ENCODE measurements at regions of chr17 and their contacts with region 1.

Region 1: GRCh38 chr17:58317421-58318064 is 11.1 kb downstream of the TSPOAP1 start:
- DNase-seq: peak in 13 of 14 experiments; percentile 59 to 91 (median 69)
- ATAC-seq: peak; percentile 96
- H3K4me3 ChIP-seq: no peak overlapping the region
- H3K4me3 Mint-ChIP-seq: no peak overlapping the region
- H3K27ac ChIP-seq: peak overlapping the region; percentile 35 to 38
- H3K27ac Mint-ChIP-seq: peak overlapping the region; percentile 62
- H3K4me1 ChIP-seq: peaks cover 17% of the 10 kb centered on the region
- H3K4me1 Mint-ChIP-seq: peaks cover 7% of the 10 kb centered on the region
- H3K27me3 ChIP-seq: no peaks in the 10 kb centered on the region
- H3K27me3 Mint-ChIP-seq: no peaks in the 10 kb centered on the region
- CTCF ChIP-seq: peak; percentile 79

Region 2: GRCh38 chr17:58277107-58277801 is 40.3 kb before region 1 on chr17:
- CTCF ChIA-PET with region 1: no interaction called
- POLR2A ChIA-PET with region 1: no interaction called
- intact Hi-C with region 1: no loop called
- DNase-seq: peak in 4 of 14 experiments; percentile 23 to 52 (median 44)
- ATAC-seq: no peak
- H3K4me3 ChIP-seq: no peak overlapping the region
- H3K4me3 Mint-ChIP-seq: no peak overlapping the region
- H3K27ac ChIP-seq: no peak overlapping the region
- H3K27ac Mint-ChIP-seq: no peak overlapping the region
- H3K4me1 ChIP-seq: peaks cover 6% of the 10 kb centered on the region
- H3K4me1 Mint-ChIP-seq: peaks cover 4% of the 10 kb centered on the region
- H3K27me3 ChIP-seq: no peaks in the 10 kb centered on the region
- H3K27me3 Mint-ChIP-seq: peaks cover 39% of the 10 kb centered on the region
- CTCF ChIP-seq: peak; percentile 25

Region 3: GRCh38 chr17:58303971-58304725 is 13.4 kb before region 1 on chr17:
- CTCF ChIA-PET with region 1: interaction called, 17 read pairs
- POLR2A ChIA-PET with region 1: interaction called, 3 read pairs
- intact Hi-C with region 1: no loop called
- DNase-seq: peak; percentile 38 to 78 (median 51)
- ATAC-seq: peak; percentile 95
- H3K4me3 ChIP-seq: no peak overlapping the region
- H3K4me3 Mint-ChIP-seq: no peak overlapping the region
- H3K27ac ChIP-seq: no peak overlapping the region
- H3K27ac Mint-ChIP-seq: no peak overlapping the region
- H3K4me1 ChIP-seq: peaks cover 8% of the 10 kb centered on the region
- H3K4me1 Mint-ChIP-seq: peaks cover 6% of the 10 kb centered on the region
- H3K27me3 ChIP-seq: no peaks in the 10 kb centered on the region
- H3K27me3 Mint-ChIP-seq: no peaks in the 10 kb centered on the region
- CTCF ChIP-seq: peak; percentile 71

Region 4: DNA sequence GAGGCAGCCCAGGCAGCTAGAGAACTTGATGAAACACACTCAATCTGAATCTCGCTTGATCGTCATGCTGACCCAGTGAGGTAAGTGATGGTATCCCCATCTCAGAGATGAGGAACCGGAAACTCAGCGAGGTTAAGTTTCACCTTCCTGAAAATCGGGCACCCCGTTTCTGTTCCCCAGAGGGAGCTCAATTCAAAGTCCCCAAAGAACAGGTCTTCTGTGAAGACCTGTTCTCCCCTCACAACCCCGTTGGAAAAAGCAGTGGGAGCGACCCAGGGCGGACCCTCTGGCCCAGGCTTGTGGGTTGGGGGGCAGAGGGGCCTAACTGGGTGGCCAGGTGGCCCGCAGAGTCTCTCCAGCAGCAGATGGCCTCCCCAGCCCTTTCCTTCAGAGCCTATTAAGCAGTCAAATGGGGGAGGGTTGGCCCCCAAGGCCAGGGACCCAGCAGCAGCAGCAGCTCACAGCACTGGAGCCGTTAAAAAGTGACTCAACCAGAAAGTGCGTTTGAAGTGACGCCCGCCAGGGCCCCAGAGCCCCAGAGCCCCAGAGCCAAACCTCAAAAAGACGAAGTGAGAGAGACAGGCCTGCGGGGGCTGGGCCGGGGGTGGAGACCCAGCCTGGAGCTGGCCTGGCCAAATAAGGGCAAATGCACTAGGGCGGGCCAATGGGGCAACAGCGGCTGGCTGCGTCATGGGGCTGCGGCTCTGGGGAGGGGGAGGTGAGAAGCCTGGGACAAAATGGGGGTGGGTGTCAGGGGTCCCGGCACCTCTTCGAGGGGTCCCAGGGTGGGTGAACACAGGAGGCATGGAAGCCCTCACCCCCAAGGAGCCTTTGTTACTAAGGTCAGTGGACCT is 20.3 kb after region 1 on chr17:
- CTCF ChIA-PET with region 1: interaction called, 211 read pairs
- POLR2A ChIA-PET with region 1: interaction called, 1,359 read pairs
- intact Hi-C with region 1: no loop called
- DNase-seq: peak; percentile 78 to 96 (median 88)
- ATAC-seq: peak; percentile 73
- H3K4me3 ChIP-seq: peak overlapping the region; percentile 84
- H3K4me3 Mint-ChIP-seq: peak overlapping the region; percentile 90
- H3K27ac ChIP-seq: peak overlapping the region; percentile 97 to 98
- H3K27ac Mint-ChIP-seq: peak overlapping the region; percentile 84
- H3K4me1 ChIP-seq: peaks cover 96% of the 10 kb centered on the region
- H3K4me1 Mint-ChIP-seq: peaks cover 92% of the 10 kb centered on the region
- H3K27me3 ChIP-seq: no peaks in the 10 kb centered on the region
- H3K27me3 Mint-ChIP-seq: no peaks in the 10 kb centered on the region
- CTCF ChIP-seq: no peak

Region 5: DNA sequence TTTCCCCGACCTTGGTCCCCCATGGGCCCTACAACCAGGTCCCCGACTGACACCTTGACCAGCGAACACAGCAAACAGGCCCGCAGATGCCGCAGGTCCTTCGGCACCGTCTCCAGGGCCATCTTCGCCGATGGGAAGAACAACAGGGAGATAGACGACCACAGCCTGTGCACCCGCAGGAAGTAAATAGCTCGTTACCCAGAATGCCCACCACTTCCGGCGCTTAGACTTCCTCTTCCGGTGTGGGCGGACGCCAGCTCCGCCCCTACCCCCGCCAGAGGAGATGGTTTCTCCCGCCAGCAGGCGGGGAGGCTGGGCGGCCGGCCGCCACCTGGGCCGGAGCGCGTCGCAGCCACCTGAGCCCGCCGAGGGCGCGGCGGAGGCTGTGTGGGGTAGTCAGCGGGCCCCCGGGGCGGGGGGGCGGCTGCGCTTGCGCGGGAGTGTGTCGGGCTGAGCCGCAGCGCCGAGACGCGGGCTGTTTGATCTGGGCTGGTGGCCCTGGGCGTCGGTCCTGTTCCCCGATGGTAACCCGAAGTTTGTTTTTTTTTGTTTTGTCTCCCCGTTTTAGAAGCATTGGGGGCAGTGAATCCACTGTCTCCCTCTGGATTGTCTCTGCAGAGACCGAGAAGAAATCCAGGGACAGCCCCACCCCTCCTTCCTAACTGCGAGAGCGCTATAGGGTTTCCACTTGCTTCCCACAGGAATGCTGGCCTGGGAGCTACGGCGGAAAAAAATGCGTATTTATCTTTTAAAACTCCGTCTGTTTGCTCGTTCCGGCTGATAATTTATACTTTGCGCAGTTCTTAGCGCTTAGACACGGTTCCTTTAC is 34.7 kb after region 1 on chr17 and contains the start of gene SUPT4H1:
- CTCF ChIA-PET with region 1: interaction called, 211 read pairs
- POLR2A ChIA-PET with region 1: interaction called, 1,359 read pairs
- intact Hi-C with region 1: no loop called
- DNase-seq: peak; percentile 83 to 98 (median 90)
- ATAC-seq: peak; percentile 87
- H3K4me3 ChIP-seq: peak within 1 kb of the TSS; percentile 78
- H3K4me3 Mint-ChIP-seq: peak within 1 kb of the TSS; percentile 99
- H3K27ac ChIP-seq: peak within 1 kb of the TSS; percentile 82 to 85
- H3K27ac Mint-ChIP-seq: peak within 1 kb of the TSS; percentile 98
- H3K4me1 ChIP-seq: peaks cover 31% of the 10 kb centered on the region
- H3K4me1 Mint-ChIP-seq: peaks cover 56% of the 10 kb centered on the region
- H3K27me3 ChIP-seq: no peaks in the 10 kb centered on the region
- H3K27me3 Mint-ChIP-seq: no peaks in the 10 kb centered on the region
- CTCF ChIP-seq: no peak
- total RNA-seq, gene SUPT4H1: 46.5 to 47.0 TPM

Region 6: GRCh38 chr17:58447039-58447975 is 129.8 kb after region 1 on chr17:
- CTCF ChIA-PET with region 1: interaction called, 4 read pairs
- POLR2A ChIA-PET with region 1: no interaction called
- intact Hi-C with region 1: loop called (anchors 1 kb)
- DNase-seq: peak; percentile 36 to 81 (median 50)
- ATAC-seq: peak; percentile 69
- H3K4me3 ChIP-seq: no peak overlapping the region
- H3K4me3 Mint-ChIP-seq: no peak overlapping the region
- H3K27ac ChIP-seq: no peak overlapping the region
- H3K27ac Mint-ChIP-seq: no peak overlapping the region
- H3K4me1 ChIP-seq: no peaks in the 10 kb centered on the region
- H3K4me1 Mint-ChIP-seq: no peaks in the 10 kb centered on the region
- H3K27me3 ChIP-seq: no peaks in the 10 kb centered on the region
- H3K27me3 Mint-ChIP-seq: no peaks in the 10 kb centered on the region
- CTCF ChIP-seq: peak; percentile 57

Region 7: GRCh38 chr17:58631523-58632323 is 314.2 kb after region 1 on chr17:
- CTCF ChIA-PET with region 1: no interaction called
- POLR2A ChIA-PET with region 1: interaction called, 3 read pairs
- intact Hi-C with region 1: loop called in 1 of 2 experiments (anchors 10 kb)
- DNase-seq: peak; percentile 85 to 97 (median 90)
- ATAC-seq: peak; percentile 89
- H3K4me3 ChIP-seq: peak overlapping the region; percentile 54
- H3K4me3 Mint-ChIP-seq: no peak overlapping the region
- H3K27ac ChIP-seq: peak overlapping the region; percentile 66 to 94
- H3K27ac Mint-ChIP-seq: no peak overlapping the region
- H3K4me1 ChIP-seq: peaks cover 10% of the 10 kb centered on the region
- H3K4me1 Mint-ChIP-seq: no peaks in the 10 kb centered on the region
- H3K27me3 ChIP-seq: no peaks in the 10 kb centered on the region
- H3K27me3 Mint-ChIP-seq: no peaks in the 10 kb centered on the region
- CTCF ChIP-seq: no peak

Measured in CD4-positive, alpha-beta T cell (primary cell).